ENCODE measurements at regions of chr9 and their contacts with region 1.

Region 1: GRCh38 chr9:28073270-28073669 is 500.0 kb upstream of the C9orf72 start:
- DNase-seq: peak; percentile 25
- ATAC-seq: no peak

Region 2: DNA sequence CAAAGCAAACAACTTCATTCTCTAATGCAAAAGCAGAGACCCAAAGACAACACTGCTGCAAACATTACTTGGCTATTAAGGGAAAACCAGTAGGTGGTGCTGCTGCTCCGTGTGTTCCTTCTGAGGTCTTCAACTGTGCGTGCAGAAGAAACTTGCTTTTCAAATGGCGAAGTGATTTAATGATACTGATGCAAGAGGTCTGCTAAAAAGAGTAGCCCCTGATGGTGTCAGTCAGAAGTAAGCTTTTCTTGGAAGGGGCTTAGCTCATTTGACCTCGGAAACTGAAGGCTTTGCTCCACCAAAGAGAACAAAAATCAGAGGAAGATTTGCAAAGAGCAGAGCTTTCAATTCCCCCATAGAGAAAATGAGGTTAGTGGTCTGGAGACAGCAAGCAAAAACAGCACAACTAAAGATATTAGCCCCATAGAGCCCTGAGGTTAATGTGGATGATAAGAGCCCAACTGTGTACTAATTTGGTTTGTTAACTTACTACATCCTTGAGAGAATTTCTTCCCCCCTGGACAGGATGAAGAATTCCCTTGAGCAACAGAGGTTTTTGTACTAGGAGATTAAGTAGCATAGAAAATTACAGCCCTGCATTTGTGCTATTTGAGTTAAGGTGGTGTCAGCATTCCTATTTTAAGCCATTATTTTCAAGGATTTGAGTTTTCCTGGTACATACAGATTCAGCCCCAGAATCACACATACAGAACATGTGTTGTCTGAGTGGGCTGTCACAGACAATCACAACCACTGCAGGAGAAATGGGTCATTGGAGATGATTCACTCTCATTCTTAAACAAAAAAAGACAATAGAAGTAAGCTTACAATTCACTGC is 346.8 kb before region 1 on chr9:
- intact Hi-C with region 1: loop called (anchors 1 to 5 kb)
- DNase-seq: peak; percentile 48
- ATAC-seq: peak; percentile 57 to 73

Region 3: GRCh38 chr9:27924502-27924901 is 148.8 kb before region 1 on chr9:
- intact Hi-C with region 1: no loop called
- DNase-seq: no peak
- ATAC-seq: no peak

Region 4: DNA sequence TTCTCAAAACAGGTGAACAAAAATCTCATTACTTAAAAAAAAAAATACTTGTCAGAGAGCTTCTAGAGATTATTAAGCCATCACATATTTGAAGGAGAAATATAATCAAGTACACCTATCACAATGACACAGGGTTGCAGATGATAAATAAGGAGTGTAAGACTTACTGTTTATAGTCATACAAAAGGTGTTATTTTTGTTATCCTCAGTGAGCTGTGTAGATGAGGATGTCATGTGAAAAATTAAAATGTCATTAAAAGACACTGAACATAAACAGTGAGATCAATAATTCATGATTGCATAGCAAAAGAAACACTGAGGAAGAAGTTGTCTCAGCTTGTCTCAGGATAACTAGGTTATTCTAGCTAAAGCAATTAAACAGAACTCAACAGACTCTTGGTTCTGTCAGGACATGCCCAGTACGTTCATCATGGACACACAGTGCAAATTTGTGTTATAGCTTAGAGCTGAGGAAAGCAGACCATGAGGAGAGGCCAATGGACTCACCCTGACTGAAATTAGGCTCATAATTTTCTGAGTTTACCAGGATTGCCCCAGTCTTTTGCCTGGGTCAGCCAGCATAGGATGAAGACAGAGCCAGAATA is 662.6 kb after region 1 on chr9:
- intact Hi-C with region 1: no loop called
- DNase-seq: no peak
- ATAC-seq: no peak

Measured in left cardiac atrium (tissue), 4 donors.